ENCODE measurements at regions of chr2 and their contacts with region 1.

Region 1: DNA sequence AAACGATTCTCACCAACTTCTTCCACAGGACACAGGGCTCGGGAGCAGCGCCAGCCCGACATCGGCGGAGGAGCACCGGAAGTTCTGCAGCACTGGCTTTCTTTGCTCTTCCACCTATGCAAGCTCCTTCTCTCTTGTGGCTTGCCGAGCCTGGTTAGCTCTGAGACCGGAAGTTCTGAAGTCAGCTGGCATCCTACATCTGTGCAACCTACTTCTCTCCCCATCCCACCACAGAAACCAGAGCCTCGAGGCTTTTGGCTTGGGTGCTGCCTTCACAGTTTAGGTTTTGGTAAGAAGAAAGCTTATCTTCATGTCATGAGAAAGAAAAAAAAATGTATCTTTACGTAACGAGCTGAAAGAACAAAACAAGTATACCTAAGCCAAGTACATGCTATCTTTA is 111.7 kb downstream of the ANKRD44 start:
- DNase-seq: peak; percentile 93 to 97 (median 96)
- H3K4me3 ChIP-seq: no peak overlapping the region
- H3K4me3 Mint-ChIP-seq: peak overlapping the region; percentile 84 to 99 (median 91)
- H3K27ac ChIP-seq: peak overlapping the region; percentile 73
- H3K27ac Mint-ChIP-seq: peak overlapping the region; percentile 95 to 99 (median 96)
- H3K4me1 ChIP-seq: peaks cover 93% of the 10 kb centered on the region
- H3K4me1 Mint-ChIP-seq: peaks cover 74 to 96% (median 86%) of the 10 kb centered on the region in 4 donors
- H3K27me3 ChIP-seq: no peaks in the 10 kb centered on the region
- H3K27me3 Mint-ChIP-seq: no peaks in the 10 kb centered on the region

Region 2: DNA sequence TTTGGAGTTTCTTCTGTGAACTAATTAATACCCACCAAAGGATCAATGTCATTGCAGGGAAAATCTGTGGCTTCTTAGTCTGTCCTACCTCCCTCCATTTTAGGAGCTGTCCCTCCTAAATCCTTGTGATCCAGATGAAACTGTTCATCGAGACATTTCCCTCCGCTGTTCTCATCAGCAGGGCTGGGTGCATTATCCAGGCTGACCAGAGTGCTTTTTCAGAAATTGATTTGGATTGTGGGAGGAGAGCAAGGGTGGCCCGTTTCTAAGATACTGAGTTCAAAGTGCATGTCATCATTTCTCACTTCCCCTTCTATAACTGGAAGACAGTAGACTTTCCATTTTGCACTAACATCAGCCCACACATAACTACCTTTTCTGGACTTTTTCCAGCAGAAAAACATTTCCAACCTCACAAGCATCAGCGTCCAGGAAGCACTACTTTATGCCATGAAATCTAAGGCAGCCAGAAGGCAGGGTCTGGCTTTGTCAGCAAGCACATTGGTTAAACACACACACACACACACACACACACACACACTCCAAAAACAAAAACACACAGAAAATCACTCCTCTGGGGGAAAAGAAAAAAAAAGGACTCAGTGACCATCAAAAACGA is 17.6 kb after region 1 on chr2:
- CTCF ChIA-PET with region 1: interaction called, 31 read pairs
- POLR2A ChIA-PET with region 1: interaction called, 1,394 read pairs
- intact Hi-C with region 1: no loop called
- DNase-seq: no peak
- H3K4me3 ChIP-seq: peak overlapping the region in 1 of 2 donors; percentile 16
- H3K4me3 Mint-ChIP-seq: peak overlapping the region; percentile 62 to 90 (median 75)
- H3K27ac ChIP-seq: peak overlapping the region; percentile 68
- H3K27ac Mint-ChIP-seq: peak overlapping the region; percentile 88 to 99 (median 94)
- H3K4me1 ChIP-seq: peaks cover 92% of the 10 kb centered on the region
- H3K4me1 Mint-ChIP-seq: peaks cover 59 to 89% (median 79%) of the 10 kb centered on the region in 4 donors
- H3K27me3 ChIP-seq: no peaks in the 10 kb centered on the region
- H3K27me3 Mint-ChIP-seq: peaks cover 0 to 3% of the 10 kb centered on the region in 2 donors

Region 3: DNA sequence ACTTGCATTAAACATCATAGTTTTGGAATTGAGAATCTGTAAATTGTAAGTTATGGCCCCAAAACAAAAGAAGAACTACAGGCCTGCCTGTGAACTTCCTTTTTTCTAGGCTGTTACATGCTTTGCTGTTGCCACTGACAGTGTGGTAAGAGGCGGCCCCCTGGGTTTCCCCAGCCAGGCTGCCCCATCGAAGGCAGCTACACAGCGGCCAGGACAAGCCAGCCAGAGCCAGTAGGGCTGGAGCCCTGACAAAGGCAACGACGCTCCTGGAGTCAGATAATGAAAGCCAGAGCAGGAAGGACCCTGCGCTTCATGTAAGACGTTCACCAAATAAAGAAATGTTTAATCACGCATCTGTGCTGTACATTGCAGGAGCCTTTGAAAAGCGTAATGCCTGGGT is 56.7 kb after region 1 on chr2:
- CTCF ChIA-PET with region 1: interaction called, 4 read pairs
- POLR2A ChIA-PET with region 1: interaction called, 1,394 read pairs
- intact Hi-C with region 1: loop called (anchors 2 kb)
- DNase-seq: peak; percentile 64 to 92 (median 74)
- H3K4me3 ChIP-seq: peak overlapping the region in 1 of 2 donors; percentile 12
- H3K4me3 Mint-ChIP-seq: peak overlapping the region; percentile 61 to 92 (median 82)
- H3K27ac ChIP-seq: peak overlapping the region; percentile 70
- H3K27ac Mint-ChIP-seq: peak overlapping the region; percentile 93 to 98 (median 96)
- H3K4me1 ChIP-seq: peaks cover 86% of the 10 kb centered on the region
- H3K4me1 Mint-ChIP-seq: peaks cover 59 to 80% (median 69%) of the 10 kb centered on the region in 4 donors
- H3K27me3 ChIP-seq: no peaks in the 10 kb centered on the region
- H3K27me3 Mint-ChIP-seq: no peaks in the 10 kb centered on the region

Region 4: DNA sequence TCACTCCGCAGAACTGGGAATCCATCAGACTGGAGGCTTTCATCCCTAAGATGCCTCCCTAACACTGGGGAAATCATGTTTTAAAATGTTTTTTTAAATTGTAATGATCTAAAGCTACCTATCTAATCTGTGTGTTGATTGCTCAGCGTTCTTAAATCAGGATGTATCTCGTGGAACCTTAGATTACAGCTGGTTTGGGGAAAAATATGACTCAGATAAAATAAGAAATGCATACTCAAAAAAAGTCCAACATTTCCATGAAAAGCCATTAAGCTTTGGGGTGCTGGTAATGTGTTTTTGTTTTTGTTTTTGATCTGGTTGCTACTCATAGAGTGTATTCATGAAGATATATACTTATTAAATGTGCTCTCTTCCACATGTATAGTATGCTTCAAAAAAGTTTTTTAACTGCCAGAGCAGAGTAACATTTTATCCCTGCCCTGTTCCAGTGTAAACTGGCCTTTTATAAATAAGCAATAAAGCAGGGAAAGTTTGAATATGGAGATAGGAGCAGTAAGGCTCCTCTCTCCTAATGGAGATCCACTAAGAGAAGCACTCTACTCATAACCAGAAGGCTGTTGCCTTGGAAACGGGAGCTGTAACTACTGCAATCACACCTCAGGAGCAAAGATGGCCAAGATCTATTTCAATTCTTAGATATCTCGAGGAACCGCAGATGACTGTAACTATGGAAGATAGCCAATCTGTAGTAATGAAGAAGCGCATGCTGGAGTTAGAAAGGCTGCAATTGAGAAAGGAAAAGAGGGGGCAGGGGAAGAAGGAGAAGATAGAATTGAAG is 70.1 kb after region 1 on chr2:
- CTCF ChIA-PET with region 1: interaction called, 5 read pairs
- POLR2A ChIA-PET with region 1: interaction called, 96 read pairs
- intact Hi-C with region 1: loop called (anchors 2 kb)
- DNase-seq: peak in 3 of 5 donors; percentile 50 to 81 (median 61)
- H3K4me3 ChIP-seq: no peak overlapping the region
- H3K4me3 Mint-ChIP-seq: peak overlapping the region in 7 of 8 donors; percentile 11 to 64 (median 59)
- H3K27ac ChIP-seq: peak overlapping the region; percentile 35
- H3K27ac Mint-ChIP-seq: peak overlapping the region; percentile 77 to 98 (median 87)
- H3K4me1 ChIP-seq: peaks cover 98% of the 10 kb centered on the region
- H3K4me1 Mint-ChIP-seq: peaks cover 71 to 99% (median 89%) of the 10 kb centered on the region in 4 donors
- H3K27me3 ChIP-seq: no peaks in the 10 kb centered on the region
- H3K27me3 Mint-ChIP-seq: no peaks in the 10 kb centered on the region

Region 5: GRCh38 chr2:197322724-197323720 is 124.1 kb after region 1 on chr2:
- CTCF ChIA-PET with region 1: interaction called, 3 read pairs
- POLR2A ChIA-PET with region 1: interaction called, 22 read pairs
- intact Hi-C with region 1: no loop called
- DNase-seq: peak in 3 of 5 donors; percentile 36 to 41 (median 36)
- H3K4me3 ChIP-seq: peak overlapping the region; percentile 44 to 48
- H3K4me3 Mint-ChIP-seq: peak overlapping the region; percentile 49 to 86 (median 76)
- H3K27ac ChIP-seq: peak overlapping the region; percentile 36
- H3K27ac Mint-ChIP-seq: peak overlapping the region; percentile 82 to 97 (median 94)
- H3K4me1 ChIP-seq: peaks cover 67% of the 10 kb centered on the region
- H3K4me1 Mint-ChIP-seq: peaks cover 40 to 71% (median 61%) of the 10 kb centered on the region in 4 donors
- H3K27me3 ChIP-seq: no peaks in the 10 kb centered on the region
- H3K27me3 Mint-ChIP-seq: no peaks in the 10 kb centered on the region

Region 6: DNA sequence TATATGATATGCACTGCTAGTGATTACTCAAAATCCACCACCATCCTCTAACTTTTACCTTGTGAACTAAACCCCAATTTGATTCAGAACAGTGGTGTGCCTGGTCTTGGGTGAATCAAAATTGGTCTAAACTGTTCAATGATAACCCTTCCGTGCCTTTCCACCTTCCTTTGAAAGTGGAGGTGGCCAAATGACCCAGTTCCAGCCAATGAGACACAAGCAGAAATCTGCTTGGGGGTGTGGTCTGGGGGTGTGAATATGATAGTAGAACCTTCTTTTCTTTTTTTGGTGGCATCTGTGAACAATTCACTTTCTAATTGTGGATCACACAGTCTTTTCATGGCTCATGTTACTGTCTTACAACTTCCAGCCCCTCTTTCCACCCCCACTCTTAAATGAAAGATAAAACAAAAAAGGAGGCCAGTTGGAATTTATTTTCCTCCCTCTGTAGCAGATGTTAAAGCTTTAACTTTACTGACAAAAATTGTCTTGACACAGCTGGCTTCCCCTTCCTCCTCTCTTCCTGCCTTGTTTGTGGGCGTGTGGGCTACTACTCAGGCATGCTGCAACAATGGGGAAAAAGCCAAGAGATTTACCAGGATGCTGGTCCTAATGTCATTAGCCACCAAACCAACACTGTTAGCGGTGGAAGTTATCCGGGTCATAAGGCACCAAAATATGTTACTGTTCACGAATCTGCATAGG is 170.5 kb after region 1 on chr2:
- CTCF ChIA-PET with region 1: no interaction called
- POLR2A ChIA-PET with region 1: no interaction called
- intact Hi-C with region 1: no loop called
- DNase-seq: no peak
- H3K4me3 ChIP-seq: no peak overlapping the region
- H3K4me3 Mint-ChIP-seq: no peak overlapping the region
- H3K27ac ChIP-seq: no peak overlapping the region
- H3K27ac Mint-ChIP-seq: peak overlapping the region in 4 of 7 donors; percentile 28 to 72 (median 42)
- H3K4me1 ChIP-seq: peaks cover 11% of the 10 kb centered on the region
- H3K4me1 Mint-ChIP-seq: peaks cover 8 to 17% (median 12%) of the 10 kb centered on the region in 4 donors
- H3K27me3 ChIP-seq: no peaks in the 10 kb centered on the region
- H3K27me3 Mint-ChIP-seq: no peaks in the 10 kb centered on the region

Region 7: DNA sequence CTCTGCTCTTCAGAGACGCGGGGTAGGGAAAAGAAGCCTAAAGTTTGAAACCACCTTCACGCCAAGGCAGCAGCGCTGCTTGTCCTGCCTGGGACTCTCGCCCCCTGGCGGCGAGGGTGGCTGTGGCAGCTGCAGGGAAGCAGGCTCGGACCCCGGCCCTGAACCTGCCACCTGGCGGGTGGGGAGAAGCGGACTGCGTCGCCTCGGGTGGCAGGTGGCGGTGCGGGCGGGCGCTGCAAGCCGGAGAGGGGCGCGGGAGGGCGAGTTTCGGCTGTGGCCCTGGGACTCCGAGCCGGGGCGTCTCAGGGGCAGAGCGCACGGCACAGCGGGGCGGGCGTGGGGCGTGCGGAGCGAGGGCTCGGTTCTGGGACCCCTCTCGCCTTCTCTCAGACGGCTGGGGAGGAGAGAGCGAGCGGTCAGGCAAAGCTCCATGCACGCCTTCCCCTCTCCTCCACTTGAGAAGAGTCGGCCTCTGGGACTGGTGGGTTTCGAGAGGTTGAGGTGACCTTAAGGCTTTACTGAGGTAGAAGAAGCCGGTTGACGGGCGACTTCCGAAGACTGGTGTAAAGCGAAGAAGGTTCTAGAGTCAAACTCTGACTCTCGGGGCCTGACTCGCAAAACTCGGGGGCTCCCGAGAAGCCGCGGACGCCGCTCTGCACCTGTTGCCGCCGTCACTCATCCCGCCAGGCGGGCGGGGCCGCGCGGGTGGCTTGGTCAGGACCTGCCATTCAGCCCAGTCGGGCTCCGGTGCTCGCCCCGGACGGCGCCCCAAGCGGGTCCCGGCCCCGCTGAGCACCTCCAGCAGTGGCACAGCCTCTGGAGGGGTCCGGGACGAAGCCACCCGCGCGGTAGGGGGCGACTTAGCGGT is 587.4 kb after region 1 on chr2:
- CTCF ChIA-PET with region 1: no interaction called
- POLR2A ChIA-PET with region 1: no interaction called
- intact Hi-C with region 1: no loop called
- DNase-seq: peak; percentile 45 to 63 (median 53)
- H3K4me3 ChIP-seq: peak overlapping the region; percentile 36 to 51
- H3K4me3 Mint-ChIP-seq: peak overlapping the region; percentile 70 to 82 (median 74)
- H3K27ac ChIP-seq: no peak overlapping the region
- H3K27ac Mint-ChIP-seq: peak overlapping the region in 1 of 7 donors; percentile 53
- H3K4me1 ChIP-seq: no peaks in the 10 kb centered on the region
- H3K4me1 Mint-ChIP-seq: peaks cover 0 to 1% (median 0%) of the 10 kb centered on the region in 4 donors
- H3K27me3 ChIP-seq: no peaks in the 10 kb centered on the region
- H3K27me3 Mint-ChIP-seq: peaks cover 10 to 14% of the 10 kb centered on the region in 2 donors